HepG2 (cell line): ENCODE measurements at regions of chr15 and their contacts with region 1.

Region 1: GRCh38 chr15:73964736-73965093 is 27.4 kb downstream of the STOML1 start:
- DNase-seq: peak; percentile 67
- ATAC-seq: peak; percentile 98
- H3K4me3 ChIP-seq: peak overlapping the region in 1 of 3 experiments; percentile 48; a peak in 1 of 6 replicates
- H3K27ac ChIP-seq: no peak overlapping the region
- H3K4me1 ChIP-seq: peaks cover 6% of the 10 kb centered on the region; the same call in 1 of the 2 replicates
- H3K27me3 ChIP-seq: no peaks in the 10 kb centered on the region; a peak in 1 of 5 replicates
- CTCF ChIP-seq: peak; percentile 90
- EP300 ChIP-seq: no peak
- POLR2A ChIP-seq: no peak
- RAD21 ChIP-seq: peak; percentile 70

Region 2: GRCh38 chr15:73950831-73951561 is 13.7 kb before region 1 on chr15:
- CTCF ChIA-PET with region 1: interaction called, 41 read pairs
- POLR2A ChIA-PET with region 1: no interaction called
- in situ Hi-C with region 1: no loop called
- intact Hi-C with region 1: loop called (anchors 1 kb)
- DNase-seq: peak; percentile 83
- ATAC-seq: peak; percentile 94
- H3K4me3 ChIP-seq: peak overlapping the region in 1 of 3 experiments; percentile 20; a peak in 2 of 6 replicates
- H3K27ac ChIP-seq: no peak overlapping the region
- H3K4me1 ChIP-seq: peaks cover 9% of the 10 kb centered on the region
- H3K27me3 ChIP-seq: peaks cover 2 to 27% of the 10 kb centered on the region in 2 experiments; a peak in 4 of 5 replicates
- CTCF ChIP-seq: peak; percentile 90
- EP300 ChIP-seq: no peak
- POLR2A ChIP-seq: no peak
- RAD21 ChIP-seq: peak; percentile 84

Region 3: GRCh38 chr15:73982222-73982962 is 17.7 kb after region 1 on chr15:
- CTCF ChIA-PET with region 1: no interaction called
- POLR2A ChIA-PET with region 1: no interaction called
- in situ Hi-C with region 1: no loop called
- intact Hi-C with region 1: no loop called
- DNase-seq: no peak
- ATAC-seq: peak; percentile 40; the same call in 2 of the 3 replicates
- H3K4me3 ChIP-seq: no peak overlapping the region
- H3K27ac ChIP-seq: no peak overlapping the region
- H3K4me1 ChIP-seq: no peaks in the 10 kb centered on the region
- H3K27me3 ChIP-seq: no peaks in the 10 kb centered on the region; a peak in 1 of 5 replicates
- CTCF ChIP-seq: no peak
- EP300 ChIP-seq: no peak
- POLR2A ChIP-seq: no peak
- RAD21 ChIP-seq: no peak

Region 4: GRCh38 chr15:74011610-74012009 is 46.9 kb after region 1 on chr15:
- CTCF ChIA-PET with region 1: no interaction called
- POLR2A ChIA-PET with region 1: no interaction called
- in situ Hi-C with region 1: no loop called
- intact Hi-C with region 1: no loop called
- DNase-seq: no peak
- ATAC-seq: no peak
- H3K4me3 ChIP-seq: no peak overlapping the region
- H3K27ac ChIP-seq: no peak overlapping the region
- H3K4me1 ChIP-seq: peaks cover 16% of the 10 kb centered on the region
- H3K27me3 ChIP-seq: no peaks in the 10 kb centered on the region
- CTCF ChIP-seq: no peak
- EP300 ChIP-seq: no peak
- POLR2A ChIP-seq: no peak
- RAD21 ChIP-seq: no peak

Region 5: GRCh38 chr15:74036271-74037170 is 71.8 kb after region 1 on chr15:
- CTCF ChIA-PET with region 1: no interaction called
- POLR2A ChIA-PET with region 1: no interaction called
- in situ Hi-C with region 1: loop called (anchors 5 kb)
- intact Hi-C with region 1: no loop called
- DNase-seq: peak; percentile 51
- ATAC-seq: peak; percentile 78
- H3K4me3 ChIP-seq: no peak overlapping the region
- H3K27ac ChIP-seq: no peak overlapping the region
- H3K4me1 ChIP-seq: no peaks in the 10 kb centered on the region
- H3K27me3 ChIP-seq: 0 out of 5 replicates have a peak, but pooled peaks cover 0 to 6% of the 10 kb centered on the region in 2 experiments
- CTCF ChIP-seq: peak; percentile 73
- EP300 ChIP-seq: no peak
- POLR2A ChIP-seq: no peak
- RAD21 ChIP-seq: no peak